Posterior vena cava (tissue), 2 donors: ENCODE measurements at regions of chr2 and their contacts with region 1.

Region 1: DNA sequence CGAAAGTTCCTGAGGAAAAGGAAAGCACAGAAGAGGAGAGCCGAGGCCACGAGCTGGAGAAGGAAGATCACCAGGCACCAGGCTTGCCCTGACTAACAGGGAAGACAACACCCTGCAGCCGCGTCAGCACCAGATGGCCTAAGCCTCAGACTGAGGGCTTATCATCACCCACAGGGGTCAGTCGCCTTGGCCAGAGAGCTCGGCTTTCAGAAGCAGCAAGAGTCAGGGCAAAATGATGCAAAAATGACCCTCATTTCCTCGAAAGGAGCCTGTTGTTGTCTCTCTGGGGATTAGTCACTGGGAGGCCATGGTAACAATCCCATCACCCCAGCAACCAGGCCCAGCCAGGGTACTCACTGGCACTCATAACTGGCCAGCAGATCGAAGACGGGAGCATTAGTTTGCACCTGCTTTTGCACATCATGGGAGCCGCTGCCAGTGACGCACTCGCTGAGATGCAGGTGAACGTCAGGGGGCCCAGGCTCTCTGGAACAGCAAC is 42.7 kb upstream of the ZFP36L2 start:
- DNase-seq: peak; percentile 98

Region 2: GRCh38 chr2:42810121-42810970 is 458.8 kb before region 1 on chr2:
- intact Hi-C with region 1: no loop called
- DNase-seq: peak; percentile 98

Region 3: GRCh38 chr2:43402452-43402944 is 133.4 kb after region 1 on chr2:
- intact Hi-C with region 1: loop called in 1 of 2 experiments (anchors 1 kb)
- DNase-seq: no peak